WTC11 (cell line): ENCODE measurements at regions of chr7 and their contacts with region 1.

Region 1: GRCh38 chr7:55255496-55256435 is 109.4 kb upstream of the LANCL2 start:
- DNase-seq: peak; percentile 81
- ATAC-seq: peak; percentile 68
- H3K4me3 Mint-ChIP-seq: peak overlapping the region; percentile 85
- H3K27ac Mint-ChIP-seq: no peak overlapping the region
- H3K4me1 Mint-ChIP-seq: peaks cover 6% of the 10 kb centered on the region
- H3K27me3 Mint-ChIP-seq: peaks cover 57% of the 10 kb centered on the region
- CTCF ChIP-seq: peak; percentile 50; the same call in 1 of the 2 replicates

Region 2: DNA sequence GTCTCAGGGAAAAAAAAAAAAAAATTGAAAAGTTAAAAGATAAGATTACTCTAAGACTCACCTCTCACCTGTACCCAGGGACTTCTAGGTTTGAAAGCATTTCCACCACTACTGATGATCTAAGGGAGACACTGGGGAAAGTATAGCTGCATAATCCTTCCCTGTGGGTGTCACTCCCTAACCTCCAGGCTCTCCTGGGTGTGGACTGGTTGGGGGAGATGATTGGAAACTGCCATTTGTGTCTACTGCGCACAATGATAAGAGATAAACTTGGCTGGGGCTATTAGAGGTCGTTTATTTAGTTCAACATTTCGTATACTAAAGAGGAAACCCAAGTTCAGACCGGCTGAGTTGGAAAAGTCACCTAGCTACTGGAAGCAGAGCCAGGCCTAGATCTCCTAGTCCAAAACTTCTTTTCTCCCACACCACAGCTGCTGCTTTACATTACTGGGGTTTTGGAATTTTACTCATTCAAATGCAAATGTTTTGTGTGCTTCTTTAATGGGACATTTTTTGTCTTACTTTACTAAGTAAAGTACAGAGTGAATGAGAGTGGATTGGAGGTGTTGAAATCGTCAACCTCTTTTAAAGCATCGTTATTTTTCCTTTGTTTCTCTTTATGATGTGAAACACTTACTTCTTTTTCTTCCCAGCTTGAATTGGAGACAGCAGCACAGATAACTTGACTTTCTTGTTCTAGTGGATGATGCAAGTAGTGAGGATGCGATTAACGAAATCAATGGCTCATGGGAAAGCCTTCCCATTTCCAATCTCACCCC is 474.4 kb before region 1 on chr7:
- CTCF ChIA-PET with region 1: interaction called, 21 read pairs
- POLR2A ChIA-PET with region 1: no interaction called
- DNase-seq: no peak
- ATAC-seq: peak; percentile 73
- H3K4me3 Mint-ChIP-seq: no peak overlapping the region
- H3K27ac Mint-ChIP-seq: peak overlapping the region; percentile 52
- H3K4me1 Mint-ChIP-seq: peaks cover 27% of the 10 kb centered on the region
- H3K27me3 Mint-ChIP-seq: peaks cover 49% of the 10 kb centered on the region
- CTCF ChIP-seq: no peak

Region 3: GRCh38 chr7:54901830-54902229 is 353.9 kb before region 1 on chr7:
- CTCF ChIA-PET with region 1: interaction called, 12 read pairs
- POLR2A ChIA-PET with region 1: no interaction called
- DNase-seq: no peak
- ATAC-seq: no peak
- H3K4me3 Mint-ChIP-seq: no peak overlapping the region
- H3K27ac Mint-ChIP-seq: no peak overlapping the region
- H3K4me1 Mint-ChIP-seq: no peaks in the 10 kb centered on the region
- H3K27me3 Mint-ChIP-seq: peaks cover 2% of the 10 kb centered on the region; the same call in 1 of the 2 replicates
- CTCF ChIP-seq: no peak

Region 4: DNA sequence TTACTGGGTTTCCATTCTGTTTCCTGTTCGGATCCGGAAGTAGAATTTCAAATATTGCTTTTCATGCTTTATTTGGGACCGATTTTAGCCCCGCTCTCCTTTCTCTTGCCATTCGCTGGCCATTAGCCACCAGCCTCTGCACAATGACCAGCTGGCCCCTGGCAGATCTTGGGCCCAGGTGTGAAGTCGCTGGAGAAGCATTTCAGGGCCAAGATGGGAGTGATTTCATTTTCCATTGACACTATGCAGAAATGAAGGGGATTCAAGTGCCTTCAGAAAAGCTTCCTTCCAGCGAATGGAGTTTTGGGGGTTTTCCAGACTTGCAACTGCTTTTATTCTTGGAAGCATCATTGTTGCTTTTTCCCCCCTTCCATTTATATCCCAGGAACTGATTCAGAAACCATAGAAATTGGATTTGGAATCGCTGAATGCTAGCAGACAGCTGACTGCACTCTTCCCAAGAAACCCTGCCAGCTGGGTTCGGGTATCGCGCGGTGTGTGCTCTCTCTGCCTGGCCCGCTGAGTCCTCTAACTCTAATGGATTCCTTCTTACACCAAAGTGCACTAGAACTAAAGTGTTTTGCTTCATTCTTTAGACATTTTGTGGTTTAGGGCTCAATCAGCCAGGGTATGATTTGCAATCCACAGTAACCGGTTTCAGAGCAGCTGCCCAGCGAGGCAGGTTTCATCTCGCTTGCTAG is 145.0 kb before region 1 on chr7:
- CTCF ChIA-PET with region 1: interaction called, 11 read pairs
- POLR2A ChIA-PET with region 1: no interaction called
- DNase-seq: no peak
- ATAC-seq: no peak
- H3K4me3 Mint-ChIP-seq: no peak overlapping the region
- H3K27ac Mint-ChIP-seq: no peak overlapping the region
- H3K4me1 Mint-ChIP-seq: peaks cover 37% of the 10 kb centered on the region
- H3K27me3 Mint-ChIP-seq: no peaks in the 10 kb centered on the region
- CTCF ChIP-seq: no peak

Region 5: DNA sequence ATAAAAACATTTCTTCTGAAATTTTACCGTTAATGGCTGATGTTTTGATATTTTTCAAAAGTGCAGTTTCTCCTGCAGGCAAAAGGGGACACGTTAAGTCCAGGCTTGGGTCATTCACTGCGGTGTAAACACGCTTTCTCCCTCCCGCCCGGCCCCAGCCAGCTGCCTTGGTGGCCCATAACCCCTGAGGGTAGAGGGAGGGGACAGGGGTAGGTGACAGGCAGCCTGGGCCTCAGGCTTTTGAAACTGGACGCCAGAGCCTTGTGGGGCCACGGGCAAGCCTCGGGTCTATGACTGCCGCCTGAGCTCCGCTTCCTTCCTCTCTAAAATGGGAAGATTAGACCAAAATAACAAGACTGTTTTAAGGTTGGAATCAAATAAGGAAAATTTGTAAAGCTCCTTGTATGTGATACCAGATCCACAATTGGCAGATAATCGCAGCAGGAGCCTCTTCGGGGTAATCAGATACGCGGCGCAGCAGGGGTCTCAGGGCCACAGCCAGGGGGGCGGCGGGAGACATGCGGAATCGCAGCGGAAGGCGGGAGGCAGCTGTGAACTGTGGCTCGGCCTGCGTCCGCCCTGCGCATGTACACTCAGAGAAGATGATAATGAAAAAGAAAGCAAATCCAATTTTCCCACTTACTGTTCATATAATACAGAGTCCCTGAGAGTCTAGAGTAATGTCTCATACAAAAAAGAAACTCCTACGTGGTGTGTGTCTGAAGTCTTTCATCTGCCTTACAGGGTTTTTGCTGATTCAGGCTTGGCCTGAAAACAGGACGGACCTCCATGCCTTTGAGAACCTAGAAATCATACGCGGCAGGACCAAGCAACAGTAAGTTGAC is 98.6 kb before region 1 on chr7:
- CTCF ChIA-PET with region 1: interaction called, 21 read pairs
- POLR2A ChIA-PET with region 1: no interaction called
- DNase-seq: no peak
- ATAC-seq: peak; percentile 72
- H3K4me3 Mint-ChIP-seq: no peak overlapping the region
- H3K27ac Mint-ChIP-seq: peak overlapping the region; percentile 91; the same call in 1 of the 2 replicates
- H3K4me1 Mint-ChIP-seq: peaks cover 36% of the 10 kb centered on the region
- H3K27me3 Mint-ChIP-seq: no peaks in the 10 kb centered on the region
- CTCF ChIP-seq: no peak

Region 6: DNA sequence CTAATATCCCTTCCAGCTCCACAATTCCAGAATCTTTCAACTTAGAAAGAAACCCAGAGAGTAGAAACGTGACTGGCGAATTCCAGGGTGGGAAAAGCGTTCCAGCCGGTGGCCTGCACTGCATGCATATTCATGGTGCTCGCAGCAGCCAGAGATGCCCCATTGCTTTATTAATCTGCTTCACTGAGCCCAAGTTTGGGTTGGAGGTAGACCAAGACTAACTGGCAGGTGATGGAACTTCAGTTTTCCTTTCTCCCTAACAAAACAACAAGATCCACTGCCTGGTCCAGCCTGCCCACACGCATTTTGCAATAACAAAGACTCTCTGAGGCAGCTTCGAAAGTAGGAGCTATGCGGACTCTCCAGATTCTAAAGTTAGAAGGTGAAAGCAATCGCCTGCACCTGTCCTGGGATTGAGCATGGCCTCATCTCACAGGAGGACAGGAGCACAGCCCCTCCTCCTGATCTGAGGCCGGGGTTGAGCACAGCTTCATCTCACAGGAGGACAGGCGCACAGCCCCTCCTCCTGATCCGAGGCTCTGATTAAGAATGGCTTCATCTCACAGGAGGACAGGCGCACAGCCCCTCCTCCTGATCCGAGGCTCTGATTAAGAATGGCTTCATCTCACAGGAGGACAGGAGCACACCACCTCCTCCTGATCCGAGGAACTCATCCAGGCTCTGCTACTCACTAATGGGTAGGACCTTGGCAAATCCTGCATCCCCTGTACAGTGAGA is 18.4 kb before region 1 on chr7:
- CTCF ChIA-PET with region 1: interaction called, 29 read pairs
- POLR2A ChIA-PET with region 1: no interaction called
- DNase-seq: no peak
- ATAC-seq: peak; percentile 53
- H3K4me3 Mint-ChIP-seq: no peak overlapping the region
- H3K27ac Mint-ChIP-seq: no peak overlapping the region
- H3K4me1 Mint-ChIP-seq: peaks cover 21% of the 10 kb centered on the region
- H3K27me3 Mint-ChIP-seq: no peaks in the 10 kb centered on the region; the same call in 1 of the 2 replicates
- CTCF ChIP-seq: no peak